ENCODE measurements at regions of chr22 and their contacts with region 1.

Region 1: DNA sequence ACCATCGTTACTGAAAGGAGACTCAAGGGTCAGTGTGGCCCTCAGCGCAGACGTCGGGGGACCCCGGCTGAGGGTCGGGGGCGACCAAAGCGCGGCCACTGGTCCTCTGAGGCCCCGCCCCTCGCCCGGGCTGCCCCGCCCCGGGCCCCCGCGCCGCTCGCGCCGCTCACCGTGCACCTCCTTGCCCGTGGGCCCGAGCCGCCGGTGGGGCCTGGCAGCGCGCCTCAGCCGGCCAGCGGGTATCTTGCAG is 468 bp downstream of the ANKRD54 start:
- DNase-seq: no peak
- ATAC-seq: peak; percentile 62
- H3K4me3 ChIP-seq: peak overlapping the region; percentile 84 to 91 (median 87)
- H3K27ac ChIP-seq: peak overlapping the region; percentile 85
- H3K4me1 ChIP-seq: peaks cover 41% of the 10 kb centered on the region
- H3K27me3 ChIP-seq: no peaks in the 10 kb centered on the region
- CTCF ChIP-seq: no peak
- EP300 ChIP-seq: no peak
- POLR2A ChIP-seq: no peak; a peak in 1 of 4 replicates
- RAD21 ChIP-seq: no peak

Region 2: DNA sequence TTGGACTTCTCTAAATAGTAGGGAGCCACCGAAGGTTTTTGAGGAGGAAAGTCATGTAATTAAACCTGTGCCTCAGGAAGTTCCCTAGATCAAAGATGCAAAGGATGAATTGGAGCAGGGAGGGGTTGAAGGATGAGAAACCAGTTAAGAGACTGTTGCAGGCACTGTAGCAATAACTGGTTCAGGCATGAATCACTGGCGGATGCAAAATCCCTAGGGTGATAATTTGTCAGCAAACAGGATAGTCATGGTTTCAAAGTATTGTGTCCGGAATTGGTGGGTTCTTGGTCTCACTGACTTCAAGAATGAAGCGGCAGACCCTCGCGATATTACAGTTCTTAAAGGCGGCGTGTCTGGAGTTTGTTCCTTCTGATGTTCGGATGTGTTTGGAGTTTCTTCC is 127.0 kb before region 1 on chr22:
- CTCF ChIA-PET with region 1: no interaction called
- POLR2A ChIA-PET with region 1: no interaction called
- in situ Hi-C with region 1: no loop called
- intact Hi-C with region 1: no loop called
- DNase-seq: no peak
- ATAC-seq: no peak
- H3K4me3 ChIP-seq: no peak overlapping the region
- H3K27ac ChIP-seq: no peak overlapping the region
- H3K4me1 ChIP-seq: no peaks in the 10 kb centered on the region
- H3K27me3 ChIP-seq: no peaks in the 10 kb centered on the region
- CTCF ChIP-seq: no peak
- EP300 ChIP-seq: no peak
- POLR2A ChIP-seq: no peak
- RAD21 ChIP-seq: no peak

Region 3: GRCh38 chr22:37896181-37896592 is 52.5 kb after region 1 on chr22:
- CTCF ChIA-PET with region 1: no interaction called
- POLR2A ChIA-PET with region 1: interaction called, 15 read pairs
- in situ Hi-C with region 1: no loop called
- intact Hi-C with region 1: no loop called
- DNase-seq: peak; percentile 90
- ATAC-seq: peak; percentile 80
- H3K4me3 ChIP-seq: peak overlapping the region; percentile 19 to 47 (median 28); a peak in 5 of 6 replicates
- H3K27ac ChIP-seq: peak overlapping the region; percentile 80
- H3K4me1 ChIP-seq: peaks cover 82% of the 10 kb centered on the region
- H3K27me3 ChIP-seq: no peaks in the 10 kb centered on the region
- CTCF ChIP-seq: no peak
- EP300 ChIP-seq: 0 out of 4 replicates have a peak, but pooled peaks of 1 of the 2 experiments have one; percentile 16
- POLR2A ChIP-seq: no peak
- RAD21 ChIP-seq: no peak

Measured in HepG2 (cell line).